ENCODE measurements at regions of chr19 and their contacts with region 1.

Region 1: GRCh38 chr19:2750808-2751443 is 11.1 kb upstream of the SLC39A3 start:
- DNase-seq: no peak
- H3K4me3 ChIP-seq: no peak overlapping the region
- H3K27ac ChIP-seq: no peak overlapping the region
- H3K4me1 ChIP-seq: no peaks in the 10 kb centered on the region
- H3K27me3 ChIP-seq: no peaks in the 10 kb centered on the region
- CTCF ChIP-seq: no peak
- POLR2A ChIP-seq: no peak

Region 2: GRCh38 chr19:2691951-2692350 is 59.0 kb before region 1 on chr19:
- CTCF ChIA-PET with region 1: no interaction called
- POLR2A ChIA-PET with region 1: no interaction called
- dilution Hi-C with region 1: loop called (anchors 10 kb)
- intact Hi-C with region 1: no loop called
- DNase-seq: no peak
- H3K4me3 ChIP-seq: no peak overlapping the region
- H3K27ac ChIP-seq: no peak overlapping the region
- H3K4me1 ChIP-seq: peaks cover 10% of the 10 kb centered on the region
- H3K27me3 ChIP-seq: no peaks in the 10 kb centered on the region
- CTCF ChIP-seq: no peak
- POLR2A ChIP-seq: no peak

Region 3: GRCh38 chr19:2739602-2740313 is 11.2 kb before region 1 on chr19 and contains the start of gene SLC39A3:
- CTCF ChIA-PET with region 1: interaction called, 15 read pairs
- POLR2A ChIA-PET with region 1: no interaction called
- dilution Hi-C with region 1: no loop called
- intact Hi-C with region 1: loop called (anchors 1 kb)
- DNase-seq: peak; percentile 97
- H3K4me3 ChIP-seq: peak within 1 kb of the TSS; percentile 84 to 96 (median 90)
- H3K27ac ChIP-seq: peak within 1 kb of the TSS; percentile 9
- H3K4me1 ChIP-seq: peaks cover 6% of the 10 kb centered on the region
- H3K27me3 ChIP-seq: no peaks in the 10 kb centered on the region
- CTCF ChIP-seq: no peak
- POLR2A ChIP-seq: no peak
- total RNA-seq, gene SLC39A3: 25.8 and 28.0 TPM in 2 replicates